Psoas muscle (tissue), 8 donors: ENCODE measurements at regions of chr2 and their contacts with region 1.

Region 1: DNA sequence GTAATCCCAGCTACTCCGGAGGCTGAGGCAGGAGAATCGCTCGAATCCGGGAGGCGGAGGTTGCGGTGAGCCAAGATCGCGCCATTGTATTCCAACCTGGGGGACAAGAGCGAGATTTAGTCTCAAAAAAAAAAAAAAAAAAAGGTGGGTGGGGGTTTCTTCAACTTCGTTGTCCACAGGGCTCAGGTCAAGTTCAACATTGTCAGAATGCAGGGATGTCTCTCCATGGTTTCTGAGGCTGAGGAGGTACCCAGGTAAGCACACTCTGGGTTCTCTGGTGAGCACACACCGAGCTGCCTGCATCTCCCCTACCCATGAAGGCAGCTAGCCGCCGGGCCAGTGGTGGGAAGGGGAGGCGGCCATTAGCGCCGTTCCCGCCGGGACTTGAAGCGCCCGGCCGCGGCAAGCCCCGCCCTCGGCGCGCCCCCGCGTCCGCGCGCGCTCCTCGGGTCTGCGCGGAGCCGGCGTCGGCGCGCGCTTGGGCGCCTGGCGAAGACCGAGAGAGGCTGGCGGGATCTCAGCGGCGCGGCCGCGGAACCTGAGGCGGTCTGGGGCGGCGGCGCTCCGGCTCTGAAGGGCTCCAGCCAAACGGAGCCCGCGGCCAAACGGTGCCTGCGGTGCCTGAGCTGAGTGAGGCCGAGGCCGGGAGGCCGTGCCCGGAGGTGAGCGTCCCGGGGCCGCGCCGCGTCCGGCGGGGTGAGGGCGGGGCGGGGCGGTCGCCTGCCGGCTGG is at the start of gene UBXN2A:
- DNase-seq: peak; percentile 83 to 90
- ATAC-seq: peak; percentile 93 to 94 (median 94)
- H3K4me3 ChIP-seq: peak within 1 kb of the TSS; percentile 94
- H3K27ac ChIP-seq: peak within 1 kb of the TSS; percentile 97
- H3K4me1 ChIP-seq: peaks cover 8% of the 10 kb centered on the region
- H3K27me3 ChIP-seq: no peaks in the 10 kb centered on the region
- CTCF ChIP-seq: no peak
- total RNA-seq, gene UBXN2A: 20.4 to 23.5 (median 20.8) TPM

Region 2: GRCh38 chr2:23385748-23386338 is 554.3 kb before region 1 on chr2:
- intact Hi-C with region 1: no loop called
- DNase-seq: peak in 1 of 2 donors; percentile 39
- ATAC-seq: peak in 3 of 4 donors; percentile 11 to 26 (median 20)
- H3K4me3 ChIP-seq: peak overlapping the region; percentile 76
- H3K27ac ChIP-seq: peak overlapping the region; percentile 47
- H3K4me1 ChIP-seq: peaks cover 27% of the 10 kb centered on the region
- H3K27me3 ChIP-seq: peaks cover 0 to 39% (median 3%) of the 10 kb centered on the region in 3 donors
- CTCF ChIP-seq: no peak

Region 3: DNA sequence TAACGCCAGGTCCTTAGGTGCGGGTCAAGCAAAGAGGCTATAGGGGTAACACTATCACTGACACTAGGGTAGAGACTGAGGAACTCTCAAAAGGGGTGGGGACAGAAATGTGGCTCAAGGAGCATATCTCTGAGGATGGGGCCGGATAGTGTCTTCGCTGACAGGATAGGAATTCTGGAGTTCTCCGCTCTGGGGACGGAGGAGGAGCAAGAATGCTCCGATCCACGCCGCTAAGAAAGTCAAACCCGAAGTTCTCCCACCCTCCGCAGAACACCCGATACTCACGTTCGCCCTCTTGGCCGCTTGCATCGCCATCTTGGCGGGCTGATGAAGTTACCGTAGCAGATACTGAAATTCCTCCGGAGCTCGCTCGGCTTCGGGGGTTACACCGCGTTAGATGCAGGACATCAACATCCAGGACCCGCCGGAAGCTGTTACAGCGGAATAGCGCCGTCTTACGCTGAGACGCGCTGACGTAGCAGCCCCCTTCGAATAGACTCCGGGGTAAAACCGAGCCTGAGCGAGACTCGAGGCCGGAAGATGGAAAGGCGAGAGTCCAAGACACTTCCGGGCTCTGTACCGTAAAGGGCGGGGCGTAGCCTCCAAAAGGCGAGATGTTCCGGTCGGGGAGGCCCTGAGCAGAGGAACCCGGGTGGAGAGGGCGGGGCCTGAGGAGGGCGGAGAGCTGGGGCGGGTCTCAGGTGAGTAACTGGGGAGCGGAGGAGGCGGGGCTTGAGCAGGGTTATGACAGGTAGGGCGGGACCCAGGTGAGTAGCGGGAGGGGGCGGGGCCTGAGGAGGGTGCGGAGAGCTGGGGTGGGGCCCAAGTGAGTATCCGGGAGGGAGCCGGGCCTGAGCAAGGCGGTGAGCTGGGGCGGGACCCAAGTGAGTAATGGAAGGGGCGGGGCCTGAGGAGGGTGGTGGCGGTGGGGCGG is 136.0 kb after region 1 on chr2 and contains the start of gene SF3B6:
- intact Hi-C with region 1: loop called in 1 of 2 experiments (anchors 5 kb)
- DNase-seq: peak; percentile 97 to 98
- ATAC-seq: peak; percentile 94 to 97 (median 96)
- H3K4me3 ChIP-seq: peak within 1 kb of the TSS; percentile 93
- H3K27ac ChIP-seq: peak within 1 kb of the TSS; percentile 87
- H3K4me1 ChIP-seq: peaks cover 7% of the 10 kb centered on the region
- H3K27me3 ChIP-seq: no peaks in the 10 kb centered on the region
- CTCF ChIP-seq: no peak
- total RNA-seq, gene SF3B6: 44.2 to 60.5 (median 55.5) TPM